GM18951 (cell line): ENCODE measurements at regions of chr14 and their contacts with region 1.

Region 1: DNA sequence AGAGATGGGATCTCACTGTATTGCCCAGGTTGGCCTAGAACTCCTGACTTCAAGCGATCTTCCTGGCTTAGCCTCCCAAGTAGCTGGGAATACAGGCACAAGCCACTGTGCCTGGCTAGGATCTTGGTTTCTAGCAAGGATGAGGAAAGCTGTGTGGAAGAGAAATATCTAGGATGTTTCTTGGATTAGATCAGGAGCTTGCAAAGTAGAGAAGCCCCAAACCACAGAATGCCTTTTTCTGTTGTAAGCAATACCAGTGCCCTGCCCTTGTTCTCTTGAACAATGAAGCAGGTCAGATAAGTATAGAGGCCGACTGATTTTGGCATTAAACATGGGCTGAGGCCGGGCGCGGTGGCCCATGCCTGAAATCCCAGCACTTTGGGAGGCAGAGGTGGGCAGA is 44.3 kb upstream of the STRN3 start:
- POLR2A ChIP-seq: no peak

Region 2: GRCh38 chr14:30988509-30988908 is 81.9 kb before region 1 on chr14:
- in situ Hi-C with region 1: loop called (anchors 10 kb)
- POLR2A ChIP-seq: no peak

Region 3: DNA sequence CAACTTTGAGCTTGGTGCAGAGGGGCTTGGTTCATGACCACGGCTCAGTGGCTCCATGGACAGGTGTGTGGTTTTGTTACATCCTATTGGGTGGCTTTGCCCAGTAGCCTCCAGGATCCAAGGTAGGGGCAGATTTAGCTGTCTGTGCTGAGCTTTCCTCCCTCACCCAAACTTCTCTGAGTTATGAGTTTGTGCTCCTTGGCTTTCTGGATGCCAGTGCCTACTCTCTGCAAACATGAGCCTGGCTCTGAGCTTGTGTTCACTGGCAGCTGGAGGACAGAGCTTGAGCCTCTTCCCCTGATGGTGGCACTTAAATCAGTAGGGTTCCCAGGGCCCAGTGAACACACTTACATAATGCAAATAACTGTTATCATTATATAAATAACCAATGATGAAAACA is 182.4 kb after region 1 on chr14:
- in situ Hi-C with region 1: no loop called
- POLR2A ChIP-seq: no peak